CD8-positive, alpha-beta memory T cell (primary cell): ENCODE measurements at regions of chr14 and their contacts with region 1.

Region 1: DNA sequence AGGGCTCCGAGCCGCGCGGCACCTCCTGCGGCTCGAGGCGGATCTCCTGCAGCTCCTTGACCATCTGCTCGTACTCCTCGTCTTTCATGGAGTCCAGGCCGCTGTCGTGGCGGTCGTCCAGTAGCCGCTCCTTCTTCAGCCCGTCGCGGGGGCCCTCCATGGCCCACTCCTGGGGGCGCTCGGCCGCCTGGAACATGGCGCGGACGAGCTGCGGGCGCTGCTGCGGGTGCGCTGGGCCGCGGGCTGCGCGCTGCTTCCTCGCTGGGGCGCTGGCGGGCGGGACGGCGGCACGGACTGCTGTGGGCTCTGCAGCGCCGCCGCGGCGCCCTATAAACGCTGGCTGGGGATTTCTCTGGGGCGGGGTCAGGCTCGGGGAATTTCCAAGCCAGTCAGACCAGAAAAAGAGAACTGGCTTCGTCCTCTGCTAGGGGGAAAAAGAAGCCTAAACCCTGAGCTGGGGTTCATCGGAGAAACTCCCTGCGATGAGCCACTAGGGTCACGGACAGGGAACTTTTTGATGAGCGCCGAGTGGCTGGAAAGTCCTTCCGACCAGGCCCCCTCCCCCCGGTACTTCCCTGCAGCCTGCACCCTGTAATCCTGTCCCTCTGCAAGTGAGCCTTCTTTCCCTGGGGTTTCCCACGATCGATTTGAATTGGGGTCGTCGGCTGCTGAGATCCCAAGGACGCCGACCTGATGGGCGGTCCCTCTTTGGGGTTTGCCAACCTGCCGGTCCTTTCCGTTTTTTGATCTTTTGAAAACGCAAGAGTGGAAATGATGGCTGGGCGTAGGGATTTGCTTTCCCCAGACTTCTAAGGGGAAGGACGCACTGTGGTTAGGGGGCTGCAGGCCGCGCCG is at the start of gene NFKBIA:
- DNase-seq: peak; percentile 86 to 96 (median 95)
- H3K4me3 ChIP-seq: peak within 1 kb of the TSS; percentile 98
- H3K4me3 Mint-ChIP-seq: peak within 1 kb of the TSS; percentile 94 to 99 (median 95)
- H3K27ac ChIP-seq: peak within 1 kb of the TSS; percentile 98
- H3K27ac Mint-ChIP-seq: peak within 1 kb of the TSS; percentile 98 to 100 (median 100)
- H3K4me1 ChIP-seq: peaks cover 51% of the 10 kb centered on the region
- H3K4me1 Mint-ChIP-seq: peaks cover 56 to 66% (median 64%) of the 10 kb centered on the region in 3 donors
- H3K27me3 ChIP-seq: no peaks in the 10 kb centered on the region
- H3K27me3 Mint-ChIP-seq: peaks cover 0 to 15% of the 10 kb centered on the region in 2 donors
- total RNA-seq, gene NFKBIA: 482 to 483 TPM

Region 2: GRCh38 chr14:35046048-35046741 is 358.5 kb before region 1 on chr14 and contains the start of gene FAM177A1:
- CTCF ChIA-PET with region 1: interaction called, 5 read pairs
- POLR2A ChIA-PET with region 1: interaction called, 14 read pairs
- DNase-seq: peak; percentile 99 to 100 (median 99)
- H3K4me3 ChIP-seq: peak within 1 kb of the TSS; percentile 90
- H3K4me3 Mint-ChIP-seq: peak within 1 kb of the TSS; percentile 89 to 99 (median 93)
- H3K27ac ChIP-seq: peak within 1 kb of the TSS; percentile 98
- H3K27ac Mint-ChIP-seq: peak within 1 kb of the TSS; percentile 98 to 100 (median 99)
- H3K4me1 ChIP-seq: peaks cover 21% of the 10 kb centered on the region
- H3K4me1 Mint-ChIP-seq: peaks cover 23 to 41% (median 34%) of the 10 kb centered on the region in 3 donors
- H3K27me3 ChIP-seq: no peaks in the 10 kb centered on the region
- H3K27me3 Mint-ChIP-seq: peaks cover 0 to 4% of the 10 kb centered on the region in 2 donors
- total RNA-seq, gene FAM177A1: 43.1 to 47.4 TPM

Region 3: DNA sequence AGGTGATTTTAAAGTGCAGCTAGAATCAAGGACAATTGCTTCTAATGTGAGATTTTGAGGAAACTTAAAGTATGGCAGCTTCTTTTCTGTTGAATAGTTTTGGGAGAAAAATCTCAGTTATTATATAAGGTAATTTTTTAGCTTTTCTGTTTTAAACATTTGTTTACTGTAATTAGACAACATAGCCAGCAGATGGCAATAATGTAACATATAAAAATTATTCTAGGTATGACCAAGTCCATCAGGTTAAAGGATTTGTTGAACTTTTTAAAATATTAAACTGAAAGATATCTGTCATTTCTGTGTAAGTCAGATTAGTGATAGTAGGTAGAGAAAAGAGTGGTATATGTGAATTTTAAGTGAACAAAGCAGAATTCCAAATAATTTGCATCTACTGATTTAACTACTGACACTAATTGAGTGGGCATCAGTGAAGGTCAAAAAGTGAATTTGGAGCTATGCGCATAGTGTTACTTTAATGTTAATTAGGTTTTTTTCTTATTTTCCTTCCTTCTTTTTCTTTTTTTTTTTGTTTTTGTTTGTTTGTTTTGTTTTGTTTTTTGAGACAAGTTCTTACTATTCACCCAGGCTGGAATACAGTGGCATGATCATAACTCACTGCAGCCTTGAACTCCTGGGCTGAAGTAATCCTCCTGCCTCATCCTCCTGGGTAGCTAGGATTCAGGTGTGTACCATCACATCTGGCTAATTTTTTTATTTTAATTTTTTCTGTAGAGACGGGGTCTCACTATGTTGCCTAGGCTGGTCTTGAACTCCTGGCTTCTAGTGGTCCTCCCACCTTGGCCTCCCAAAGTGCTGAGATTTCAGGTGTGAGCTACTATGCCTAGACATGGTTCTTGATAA is 263.7 kb before region 1 on chr14:
- CTCF ChIA-PET with region 1: interaction called, 273 read pairs
- POLR2A ChIA-PET with region 1: interaction called, 21 read pairs
- DNase-seq: peak in 2 of 5 donors; percentile 20 to 30
- H3K4me3 ChIP-seq: no peak overlapping the region
- H3K4me3 Mint-ChIP-seq: no peak overlapping the region
- H3K27ac ChIP-seq: no peak overlapping the region
- H3K27ac Mint-ChIP-seq: peak overlapping the region in 7 of 8 donors; percentile 41 to 87 (median 71)
- H3K4me1 ChIP-seq: peaks cover 3% of the 10 kb centered on the region
- H3K4me1 Mint-ChIP-seq: peaks cover 7 to 32% (median 19%) of the 10 kb centered on the region in 3 donors
- H3K27me3 ChIP-seq: no peaks in the 10 kb centered on the region
- H3K27me3 Mint-ChIP-seq: no peaks in the 10 kb centered on the region

Region 4: DNA sequence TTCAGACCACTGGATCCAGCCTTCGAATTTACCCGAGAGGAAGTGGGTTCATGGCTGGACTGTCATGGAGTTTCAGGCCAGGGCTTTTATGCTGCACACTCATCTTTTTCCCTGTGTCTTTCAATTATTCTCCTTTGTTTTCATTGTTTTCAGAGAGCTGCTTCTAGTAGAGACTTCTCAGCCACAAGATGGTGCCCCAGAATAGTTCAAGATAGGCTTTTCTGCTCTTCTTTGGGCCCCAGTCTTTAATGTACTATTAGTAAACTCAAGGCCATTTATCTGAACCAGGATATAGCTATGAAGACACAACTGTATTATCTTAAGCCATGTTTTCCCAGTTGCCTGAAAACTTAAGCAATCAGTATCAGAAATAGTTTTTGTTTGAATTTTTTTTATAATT is 142.9 kb before region 1 on chr14:
- CTCF ChIA-PET with region 1: interaction called, 16 read pairs
- POLR2A ChIA-PET with region 1: no interaction called
- DNase-seq: no peak
- H3K4me3 ChIP-seq: no peak overlapping the region
- H3K4me3 Mint-ChIP-seq: no peak overlapping the region
- H3K27ac ChIP-seq: no peak overlapping the region
- H3K27ac Mint-ChIP-seq: peak overlapping the region in 1 of 8 donors; percentile 37
- H3K4me1 ChIP-seq: no peaks in the 10 kb centered on the region
- H3K4me1 Mint-ChIP-seq: peaks cover 0 to 6% (median 1%) of the 10 kb centered on the region in 3 donors
- H3K27me3 ChIP-seq: no peaks in the 10 kb centered on the region
- H3K27me3 Mint-ChIP-seq: peaks cover 0 to 1% of the 10 kb centered on the region in 2 donors

Region 5: GRCh38 chr14:35292051-35292769 is 112.5 kb before region 1 on chr14 and contains the start of gene PSMA6:
- CTCF ChIA-PET with region 1: interaction called, 16 read pairs
- POLR2A ChIA-PET with region 1: interaction called, 71 read pairs
- DNase-seq: peak; percentile 98 to 99 (median 99)
- H3K4me3 ChIP-seq: peak within 1 kb of the TSS; percentile 96
- H3K4me3 Mint-ChIP-seq: peak within 1 kb of the TSS; percentile 90 to 99 (median 97)
- H3K27ac ChIP-seq: peak within 1 kb of the TSS; percentile 92
- H3K27ac Mint-ChIP-seq: peak within 1 kb of the TSS; percentile 94 to 99 (median 98)
- H3K4me1 ChIP-seq: peaks cover 40% of the 10 kb centered on the region
- H3K4me1 Mint-ChIP-seq: peaks cover 51 to 59% (median 57%) of the 10 kb centered on the region in 3 donors
- H3K27me3 ChIP-seq: no peaks in the 10 kb centered on the region
- H3K27me3 Mint-ChIP-seq: no peaks in the 10 kb centered on the region
- total RNA-seq, gene PSMA6: 399 to 400 TPM

Region 6: DNA sequence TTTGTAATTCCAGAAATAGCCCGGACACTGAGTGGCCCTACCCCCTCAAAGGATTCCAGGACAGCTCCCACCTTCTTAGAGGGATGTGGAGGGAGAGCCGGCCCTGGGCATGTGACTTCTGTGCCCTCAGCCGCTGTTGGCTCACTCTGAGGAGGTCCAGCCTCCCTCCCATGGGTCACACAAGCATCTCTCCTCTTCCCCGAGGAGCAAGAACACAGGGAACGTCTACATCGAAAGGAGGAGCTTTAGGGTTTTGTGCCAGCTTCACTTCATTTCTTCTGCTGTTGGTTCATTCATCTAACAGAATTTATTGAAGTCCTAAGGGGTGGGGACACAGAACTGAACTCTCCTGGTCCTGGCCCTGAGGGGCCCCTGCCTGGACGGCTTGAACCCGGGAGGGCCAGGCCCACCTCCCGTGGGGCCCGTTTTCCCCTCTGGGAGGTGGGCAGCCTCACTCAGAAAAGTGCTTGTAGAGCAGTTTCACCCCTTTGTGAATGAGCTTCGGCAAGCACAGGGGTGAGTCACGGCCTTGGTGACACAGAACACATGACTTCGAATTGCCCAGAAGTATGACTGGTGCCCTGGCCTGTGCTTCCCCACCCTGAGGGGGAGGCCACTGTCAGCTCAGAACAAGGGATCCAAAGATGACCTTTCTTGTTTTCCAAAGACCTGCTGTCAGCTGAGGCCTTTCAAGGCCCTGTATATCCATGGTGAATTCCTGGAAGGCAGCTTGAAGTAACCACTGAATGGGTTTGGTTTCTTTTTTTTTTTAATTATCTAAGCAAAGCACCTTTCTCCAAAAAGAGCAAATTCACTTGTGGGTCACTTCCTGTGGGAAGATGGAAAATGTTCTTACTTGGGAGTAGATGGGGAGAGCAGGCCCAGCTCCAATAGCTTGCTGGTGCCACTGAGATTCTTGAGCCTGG is 39.3 kb before region 1 on chr14:
- CTCF ChIA-PET with region 1: interaction called, 7 read pairs
- POLR2A ChIA-PET with region 1: interaction called, 34 read pairs
- DNase-seq: peak in 1 of 5 donors; percentile 60
- H3K4me3 ChIP-seq: no peak overlapping the region
- H3K4me3 Mint-ChIP-seq: no peak overlapping the region
- H3K27ac ChIP-seq: peak overlapping the region; percentile 54
- H3K27ac Mint-ChIP-seq: peak overlapping the region in 4 of 8 donors; percentile 56 to 72 (median 60)
- H3K4me1 ChIP-seq: peaks cover 27% of the 10 kb centered on the region
- H3K4me1 Mint-ChIP-seq: peaks cover 24 to 38% (median 28%) of the 10 kb centered on the region in 3 donors
- H3K27me3 ChIP-seq: no peaks in the 10 kb centered on the region
- H3K27me3 Mint-ChIP-seq: no peaks in the 10 kb centered on the region

Region 7: DNA sequence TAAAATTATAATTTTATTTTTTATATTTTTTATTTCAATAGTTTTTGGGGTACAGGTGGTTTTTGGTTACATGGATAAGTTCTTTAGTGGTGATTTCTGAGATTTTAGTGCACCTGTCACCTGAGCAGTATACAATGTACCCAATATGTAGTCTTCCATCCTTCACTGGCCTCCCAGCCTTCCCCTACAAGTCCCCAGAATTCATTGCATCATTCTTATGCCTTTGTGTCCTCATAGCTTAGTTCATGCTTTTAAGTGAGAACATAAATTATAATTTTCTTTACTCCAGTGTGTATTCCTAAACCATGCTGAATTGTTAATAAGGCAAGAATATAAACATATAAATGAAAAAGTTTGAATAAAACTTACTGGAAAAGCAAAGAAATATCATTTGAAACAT is 18.9 kb after region 1 on chr14:
- CTCF ChIA-PET with region 1: interaction called, 58 read pairs
- POLR2A ChIA-PET with region 1: interaction called, 99 read pairs
- DNase-seq: no peak
- H3K4me3 ChIP-seq: no peak overlapping the region
- H3K4me3 Mint-ChIP-seq: no peak overlapping the region
- H3K27ac ChIP-seq: no peak overlapping the region
- H3K27ac Mint-ChIP-seq: no peak overlapping the region
- H3K4me1 ChIP-seq: peaks cover 7% of the 10 kb centered on the region
- H3K4me1 Mint-ChIP-seq: peaks cover 6 to 15% (median 12%) of the 10 kb centered on the region in 3 donors
- H3K27me3 ChIP-seq: no peaks in the 10 kb centered on the region
- H3K27me3 Mint-ChIP-seq: peaks cover 0 to 1% of the 10 kb centered on the region in 2 donors